H1 (cell line): ENCODE measurements at regions of chr3 and their contacts with region 1.

Region 1: DNA sequence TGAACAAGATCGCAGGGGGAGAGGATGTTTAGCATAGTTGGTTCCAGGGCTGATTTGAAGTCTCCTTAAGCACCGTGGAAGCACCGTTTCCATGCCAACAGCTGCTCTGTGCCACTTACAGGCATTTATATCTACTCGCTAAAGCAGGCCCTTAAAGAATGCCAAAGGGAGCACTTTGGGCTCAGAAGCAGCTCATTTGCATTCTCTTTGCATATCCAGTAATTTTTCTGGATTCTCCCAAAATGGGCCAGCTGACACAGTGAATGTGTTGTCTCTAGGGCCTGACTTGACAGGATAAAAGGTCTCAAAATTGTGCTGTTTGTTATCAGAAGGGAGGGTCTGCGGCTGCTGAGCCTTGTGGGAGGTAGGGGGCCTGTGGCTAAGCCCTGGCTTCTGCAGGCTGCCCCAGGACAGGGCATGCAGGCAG is 138.6 kb downstream of the FBLN2 start:
- DNase-seq: no peak
- H3K4me3 ChIP-seq: no peak overlapping the region
- H3K27ac ChIP-seq: no peak overlapping the region
- H3K4me1 ChIP-seq: peaks cover 2 to 15% (median 8%) of the 10 kb centered on the region in 4 experiments; a peak in 6 of 7 replicates
- H3K27me3 ChIP-seq: peaks cover 0 to 2% (median under 1%) of the 10 kb centered on the region in 4 experiments; a peak in 3 of 7 replicates
- CTCF ChIP-seq: no peak
- EP300 ChIP-seq: no peak
- POLR2A ChIP-seq: no peak
- RAD21 ChIP-seq: no peak

Region 2: DNA sequence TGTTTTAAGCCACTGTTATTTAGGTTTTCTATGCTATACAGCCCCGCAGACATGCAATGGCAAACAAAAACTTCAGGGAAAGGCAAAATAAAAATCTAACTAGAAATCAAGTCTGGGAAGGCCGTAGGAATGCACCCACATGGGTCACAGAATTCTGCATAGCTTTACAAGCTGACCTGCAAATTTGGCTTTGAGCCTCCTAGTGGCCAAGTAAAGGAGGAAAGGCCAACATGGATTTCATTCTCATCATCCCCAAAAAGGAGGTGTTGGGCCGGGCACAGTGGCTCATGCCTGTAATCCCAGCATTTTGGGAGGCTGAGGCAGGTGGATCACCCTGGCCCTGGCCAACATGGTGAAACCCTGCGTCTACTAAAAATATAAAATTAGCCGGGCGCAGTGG is 14.3 kb before region 1 on chr3:
- CTCF ChIA-PET with region 1: interaction called, 22 read pairs
- POLR2A ChIA-PET with region 1: no interaction called
- DNase-seq: no peak
- H3K4me3 ChIP-seq: no peak overlapping the region
- H3K27ac ChIP-seq: no peak overlapping the region
- H3K4me1 ChIP-seq: no peaks in the 10 kb centered on the region
- H3K27me3 ChIP-seq: no peaks in the 10 kb centered on the region
- CTCF ChIP-seq: peak; percentile 8 to 71 (median 56)
- EP300 ChIP-seq: no peak
- POLR2A ChIP-seq: no peak
- RAD21 ChIP-seq: peak; percentile 34 to 53

Region 3: DNA sequence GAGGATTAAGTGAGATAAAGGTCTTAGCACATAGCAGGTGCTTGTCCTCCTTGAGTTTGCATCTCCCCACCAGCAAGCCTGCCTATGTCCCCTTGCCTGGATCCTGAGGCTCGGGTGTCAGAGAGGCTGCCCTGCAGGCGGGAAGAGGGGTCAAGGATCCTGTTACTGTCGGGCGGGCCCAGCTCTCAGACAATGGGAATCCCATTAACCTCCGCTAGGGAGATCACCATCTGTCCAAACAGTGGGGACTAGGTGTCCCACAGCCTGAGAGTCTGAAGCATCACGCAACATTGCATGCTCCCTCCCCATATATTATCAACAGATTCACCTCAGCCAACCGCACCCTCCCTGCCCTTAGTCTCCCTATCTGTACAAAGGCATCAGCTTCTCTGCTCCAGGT is 12.8 kb after region 1 on chr3:
- CTCF ChIA-PET with region 1: interaction called, 12 read pairs
- POLR2A ChIA-PET with region 1: interaction called, 3 read pairs
- DNase-seq: no peak
- H3K4me3 ChIP-seq: no peak overlapping the region
- H3K27ac ChIP-seq: no peak overlapping the region
- H3K4me1 ChIP-seq: peaks cover 5 to 15% (median 7%) of the 10 kb centered on the region in 4 experiments
- H3K27me3 ChIP-seq: no peaks in the 10 kb centered on the region
- CTCF ChIP-seq: no peak
- EP300 ChIP-seq: no peak
- POLR2A ChIP-seq: no peak
- RAD21 ChIP-seq: no peak